Pancreas (tissue), 10 donors: ENCODE measurements at regions of chr14 and their contacts with region 1.

Region 1: DNA sequence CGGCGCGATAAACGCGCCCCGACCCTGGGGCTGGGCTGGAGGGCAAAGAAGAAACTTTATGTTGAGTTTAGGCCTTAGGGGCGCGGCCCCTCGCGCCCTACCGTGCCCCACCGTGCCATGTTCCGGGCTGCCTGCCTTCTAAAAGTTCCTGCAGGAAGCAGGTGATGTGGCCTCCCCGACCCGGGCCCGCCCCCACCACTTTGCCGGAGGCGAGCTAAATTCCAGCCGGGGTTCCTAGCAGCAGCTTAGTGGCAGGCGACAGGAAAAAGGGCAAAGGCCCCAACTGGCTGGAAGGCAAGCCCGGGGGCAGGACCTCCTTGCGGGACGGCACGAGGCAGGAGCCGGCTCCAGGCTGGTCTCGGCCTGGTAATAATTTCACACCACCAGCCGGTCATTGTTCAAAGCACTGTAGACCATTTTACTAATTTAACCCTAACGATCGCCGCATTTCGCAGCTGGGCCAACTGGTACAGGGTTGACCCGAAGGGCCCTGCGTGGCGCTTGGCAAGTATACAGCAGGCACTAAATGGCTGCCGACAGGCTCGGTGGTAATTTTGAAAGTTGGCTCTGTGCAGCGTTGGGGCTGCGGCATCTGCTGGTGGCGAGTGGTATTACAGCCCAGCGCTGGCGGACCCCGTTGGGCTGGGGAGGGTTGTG is 895 bp upstream of the CCDC88C start:
- DNase-seq: peak; percentile 53 to 88 (median 74)
- ATAC-seq: peak; percentile 44 to 80 (median 70)
- H3K4me3 ChIP-seq: peak overlapping the region; percentile 28 to 86 (median 68)
- H3K27ac ChIP-seq: peak overlapping the region; percentile 8 to 51 (median 30)
- H3K4me1 ChIP-seq: peaks cover 5 to 23% (median 15%) of the 10 kb centered on the region in 3 donors
- H3K27me3 ChIP-seq: no peaks in the 10 kb centered on the region
- CTCF ChIP-seq: peak; percentile 93 to 99 (median 94)

Region 2: DNA sequence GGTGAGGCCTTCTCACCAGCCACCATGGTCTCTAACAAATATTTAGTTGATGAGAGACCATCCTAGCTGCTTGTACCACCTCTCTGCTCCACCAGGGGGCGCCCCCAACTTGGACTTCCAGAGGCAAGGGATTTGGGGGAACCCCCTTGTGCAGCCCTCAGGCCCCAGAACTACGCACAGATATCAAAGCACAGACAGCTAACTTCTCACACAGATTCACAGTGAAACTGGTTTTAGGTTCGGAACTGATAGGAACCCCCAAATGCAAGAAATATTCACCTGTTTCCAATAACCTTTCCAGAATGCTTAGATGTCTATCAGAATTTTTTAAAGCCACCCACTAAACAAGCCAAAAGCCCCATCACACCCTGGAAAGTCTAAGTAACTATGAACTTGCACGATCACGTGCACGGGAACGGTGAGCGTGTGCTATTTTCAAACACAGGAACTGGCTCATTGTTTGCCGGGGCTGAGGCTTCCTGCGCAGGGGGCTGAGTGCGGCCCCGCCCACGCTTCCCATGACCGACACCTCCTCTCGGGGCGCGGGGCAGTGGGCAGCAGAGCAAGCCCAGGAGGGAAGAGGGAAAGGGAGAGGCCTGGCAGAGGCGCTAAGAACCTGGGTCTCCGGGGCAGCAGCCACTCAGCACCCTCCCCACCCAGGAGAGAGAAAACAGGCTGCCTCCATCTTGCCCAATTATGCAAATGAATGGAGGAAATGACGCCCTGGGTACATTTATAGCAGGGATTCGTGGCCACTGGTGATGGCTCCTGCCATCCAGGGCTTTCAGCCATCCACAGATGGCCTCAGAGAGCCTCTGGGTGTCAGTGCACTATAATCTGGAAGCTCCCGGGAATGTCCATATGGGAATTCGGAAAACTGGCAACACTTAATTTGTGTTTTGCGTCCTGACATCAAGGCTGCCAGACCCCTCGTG is 94.6 kb before region 1 on chr14:
- intact Hi-C with region 1: loop called (anchors 5 to 10 kb)
- DNase-seq: peak; percentile 60 to 95 (median 82)
- ATAC-seq: peak; percentile 81 to 95 (median 89)
- H3K4me3 ChIP-seq: peak overlapping the region in 1 of 4 donors; percentile 19
- H3K27ac ChIP-seq: peak overlapping the region in 1 of 4 donors; percentile 30
- H3K4me1 ChIP-seq: no peaks in the 10 kb centered on the region
- H3K27me3 ChIP-seq: no peaks in the 10 kb centered on the region
- CTCF ChIP-seq: peak; percentile 96 to 97 (median 96)

Region 3: GRCh38 chr14:91968280-91968679 is 549.8 kb after region 1 on chr14:
- intact Hi-C with region 1: no loop called
- DNase-seq: no peak
- ATAC-seq: no peak
- H3K4me3 ChIP-seq: no peak overlapping the region
- H3K27ac ChIP-seq: no peak overlapping the region
- H3K4me1 ChIP-seq: no peaks in the 10 kb centered on the region
- H3K27me3 ChIP-seq: no peaks in the 10 kb centered on the region
- CTCF ChIP-seq: no peak